Posterior vena cava (tissue), 2 donors: ENCODE measurements at regions of chr1 and their contacts with region 1.

Region 1: DNA sequence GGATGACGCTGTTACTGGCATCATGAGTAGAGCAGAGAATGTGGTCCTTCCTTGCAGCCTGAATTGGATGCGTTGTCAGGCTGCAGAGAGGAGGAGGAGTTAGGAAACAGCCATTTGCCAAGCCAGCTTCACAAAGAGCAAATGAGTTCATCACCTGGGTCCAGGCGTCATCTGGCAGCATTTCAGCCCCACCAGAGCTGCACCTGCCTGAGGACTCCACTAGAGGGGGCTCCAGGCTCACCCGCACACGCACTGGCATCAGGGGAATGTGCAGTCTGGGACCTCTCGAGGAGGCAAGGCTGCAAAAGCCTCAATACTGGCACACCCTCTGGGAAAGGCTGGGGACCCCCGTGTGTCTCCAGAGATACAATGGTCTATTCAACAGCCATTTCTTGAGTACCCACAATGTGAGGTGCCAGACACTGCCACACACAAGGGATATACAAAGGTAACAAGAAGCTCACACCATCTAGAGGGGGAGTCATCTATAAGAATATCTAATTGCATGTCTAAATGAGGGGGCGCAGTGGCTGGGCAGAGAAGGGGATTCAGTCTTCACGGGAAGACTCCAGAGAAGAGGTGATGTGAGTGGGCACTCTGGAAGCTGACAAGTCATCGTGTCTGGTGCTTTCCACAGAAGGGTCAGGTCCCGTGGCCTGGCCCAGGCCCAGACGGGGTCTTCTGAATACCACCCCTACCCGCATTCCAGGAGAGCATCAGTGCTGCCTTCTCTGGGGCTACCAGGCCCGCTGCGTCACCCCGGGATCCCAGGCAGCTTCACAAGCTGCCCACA is 53.5 kb upstream of the CNTN2 start:
- DNase-seq: peak; percentile 89

Region 2: DNA sequence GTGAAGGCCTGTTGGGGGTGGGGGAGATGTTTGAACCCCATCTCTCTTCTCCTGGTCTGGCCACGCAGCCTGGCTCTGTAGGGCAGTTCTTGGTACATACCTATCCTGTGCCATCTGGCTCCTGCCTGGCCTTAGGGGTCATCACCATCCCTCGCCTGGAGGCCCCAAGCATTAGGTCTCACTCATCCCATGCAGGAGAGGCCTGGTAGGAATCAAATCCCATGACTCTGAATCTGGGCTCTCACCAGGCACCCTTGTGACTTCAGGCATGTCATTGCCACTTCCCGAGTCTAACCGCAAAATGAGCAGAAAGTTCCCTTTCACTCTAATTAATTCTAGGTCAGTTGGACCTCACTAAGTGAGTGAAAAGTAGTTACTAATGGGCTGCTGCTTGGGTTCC is 874.9 kb before region 1 on chr1:
- intact Hi-C with region 1: loop called in 1 of 2 experiments (anchors 5 kb)
- DNase-seq: no peak

Region 3: GRCh38 chr1:205042911-205043806 is 53.7 kb after region 1 on chr1 and contains the start of gene CNTN2:
- intact Hi-C with region 1: no loop called
- DNase-seq: no peak
- total RNA-seq, gene CNTN2: 0.14 to 0.28 TPM

Region 4: DNA sequence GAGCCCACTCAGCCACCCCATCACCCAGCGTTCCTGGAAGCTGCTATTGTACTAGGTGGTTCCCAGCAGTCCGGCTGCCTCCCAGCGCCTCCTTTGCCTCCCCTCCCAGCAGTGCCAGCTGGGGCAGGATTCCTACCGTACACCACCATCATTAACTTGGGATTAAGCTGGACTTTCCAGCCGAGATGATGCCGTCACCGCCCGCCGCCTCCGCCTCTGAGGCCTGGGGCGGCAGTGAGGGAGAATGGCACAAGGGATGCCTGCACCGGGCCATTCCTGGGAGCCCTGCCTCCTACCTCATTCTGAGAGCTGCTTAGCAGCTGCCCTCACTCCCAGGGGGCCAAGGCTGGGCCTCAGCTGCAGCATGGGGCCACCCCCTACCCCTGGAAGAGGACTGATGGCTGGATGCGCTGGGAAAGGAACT is 66.7 kb after region 1 on chr1:
- intact Hi-C with region 1: loop called (anchors 5 kb)
- DNase-seq: no peak

Region 5: DNA sequence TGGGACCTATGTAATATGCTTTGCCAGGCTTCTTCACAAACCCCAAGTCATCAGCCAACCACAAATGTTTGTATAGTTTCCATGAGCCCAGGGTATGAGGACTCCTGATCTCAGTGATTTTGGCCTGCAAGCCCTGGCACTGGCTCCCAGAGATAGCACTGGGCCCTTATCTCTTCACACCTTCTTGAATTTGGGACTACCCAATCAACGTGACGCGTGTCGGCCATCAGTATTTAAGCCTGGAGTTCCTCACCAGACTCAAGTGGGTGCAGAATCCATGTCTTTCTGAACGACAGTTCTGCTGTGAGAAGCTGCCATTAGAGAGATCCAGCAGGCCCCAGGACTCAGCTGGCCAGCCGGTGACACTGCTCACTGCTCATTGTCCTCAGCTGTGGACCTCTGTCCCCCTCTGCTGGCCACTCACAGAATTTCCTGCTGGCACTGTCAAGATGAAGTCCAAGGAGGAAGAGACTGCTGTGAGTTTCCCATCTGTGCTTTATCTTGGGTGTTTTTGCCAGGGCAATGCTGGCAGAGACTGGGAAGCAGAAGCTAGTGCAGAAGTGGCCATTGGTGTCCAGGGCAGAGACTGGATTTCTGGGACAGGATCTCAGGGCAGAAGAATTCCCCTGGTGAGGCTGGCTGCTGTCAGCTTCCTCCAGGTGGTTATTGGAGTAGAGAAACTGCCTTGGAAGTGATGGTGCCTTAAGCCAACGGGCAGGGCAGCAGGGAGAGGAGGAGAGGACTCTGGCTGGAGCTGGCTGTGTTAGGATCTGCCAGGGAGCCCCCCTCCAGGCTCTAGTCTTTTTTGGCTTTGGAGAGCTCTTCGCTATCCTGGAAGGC is 266.7 kb after region 1 on chr1:
- intact Hi-C with region 1: loop called (anchors 10 kb)
- DNase-seq: peak; percentile 96